WTC11 (cell line): ENCODE measurements at regions of chr17 and their contacts with region 1.

Region 1: GRCh38 chr17:6894206-6894528 is 62.6 kb upstream of the TEKT1 start:
- DNase-seq: peak; percentile 87
- ATAC-seq: peak; percentile 91
- H3K4me3 Mint-ChIP-seq: peak overlapping the region; percentile 73
- H3K27ac Mint-ChIP-seq: no peak overlapping the region
- H3K4me1 Mint-ChIP-seq: no peaks in the 10 kb centered on the region
- H3K27me3 Mint-ChIP-seq: peaks cover 55% of the 10 kb centered on the region
- CTCF ChIP-seq: peak; percentile 81

Region 2: DNA sequence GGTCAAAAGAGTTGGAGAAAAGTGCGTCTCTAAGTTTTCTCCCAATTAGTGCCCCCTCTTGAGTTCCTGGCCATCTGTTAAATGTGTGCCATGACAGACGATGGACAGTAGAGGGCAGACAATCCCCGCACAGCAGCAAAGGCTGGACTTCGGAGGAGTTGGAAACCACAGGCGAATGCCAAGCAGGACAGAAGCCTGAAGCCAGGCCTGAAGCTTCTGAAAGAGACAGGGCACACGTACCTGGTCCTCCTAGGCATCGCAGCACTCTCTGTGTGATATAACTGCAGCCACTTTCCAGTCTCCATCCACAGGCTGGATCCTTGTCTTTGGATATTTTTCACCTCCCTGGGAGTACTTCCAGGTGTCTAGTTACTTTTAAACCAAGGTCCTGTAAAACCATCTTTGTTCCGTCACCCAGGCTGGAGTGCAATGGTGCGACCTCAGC is 228.1 kb before region 1 on chr17:
- CTCF ChIA-PET with region 1: interaction called, 31 read pairs
- POLR2A ChIA-PET with region 1: no interaction called
- DNase-seq: peak; percentile 78
- ATAC-seq: peak; percentile 95
- H3K4me3 Mint-ChIP-seq: no peak overlapping the region
- H3K27ac Mint-ChIP-seq: no peak overlapping the region
- H3K4me1 Mint-ChIP-seq: peaks cover 12% of the 10 kb centered on the region
- H3K27me3 Mint-ChIP-seq: peaks cover 41% of the 10 kb centered on the region
- CTCF ChIP-seq: peak; percentile 68

Region 3: GRCh38 chr17:6701719-6702118 is 192.4 kb before region 1 on chr17:
- CTCF ChIA-PET with region 1: interaction called, 15 read pairs
- POLR2A ChIA-PET with region 1: no interaction called
- DNase-seq: peak; percentile 86
- ATAC-seq: peak; percentile 99
- H3K4me3 Mint-ChIP-seq: no peak overlapping the region
- H3K27ac Mint-ChIP-seq: no peak overlapping the region
- H3K4me1 Mint-ChIP-seq: peaks cover 6% of the 10 kb centered on the region
- H3K27me3 Mint-ChIP-seq: no peaks in the 10 kb centered on the region; the same call in 1 of the 2 replicates
- CTCF ChIP-seq: peak; percentile 55

Region 4: GRCh38 chr17:6843241-6843880 is 50.8 kb before region 1 on chr17:
- CTCF ChIA-PET with region 1: interaction called, 68 read pairs
- POLR2A ChIA-PET with region 1: no interaction called
- DNase-seq: no peak
- ATAC-seq: no peak
- H3K4me3 Mint-ChIP-seq: no peak overlapping the region
- H3K27ac Mint-ChIP-seq: no peak overlapping the region
- H3K4me1 Mint-ChIP-seq: no peaks in the 10 kb centered on the region
- H3K27me3 Mint-ChIP-seq: peaks cover 32% of the 10 kb centered on the region
- CTCF ChIP-seq: no peak

Region 5: DNA sequence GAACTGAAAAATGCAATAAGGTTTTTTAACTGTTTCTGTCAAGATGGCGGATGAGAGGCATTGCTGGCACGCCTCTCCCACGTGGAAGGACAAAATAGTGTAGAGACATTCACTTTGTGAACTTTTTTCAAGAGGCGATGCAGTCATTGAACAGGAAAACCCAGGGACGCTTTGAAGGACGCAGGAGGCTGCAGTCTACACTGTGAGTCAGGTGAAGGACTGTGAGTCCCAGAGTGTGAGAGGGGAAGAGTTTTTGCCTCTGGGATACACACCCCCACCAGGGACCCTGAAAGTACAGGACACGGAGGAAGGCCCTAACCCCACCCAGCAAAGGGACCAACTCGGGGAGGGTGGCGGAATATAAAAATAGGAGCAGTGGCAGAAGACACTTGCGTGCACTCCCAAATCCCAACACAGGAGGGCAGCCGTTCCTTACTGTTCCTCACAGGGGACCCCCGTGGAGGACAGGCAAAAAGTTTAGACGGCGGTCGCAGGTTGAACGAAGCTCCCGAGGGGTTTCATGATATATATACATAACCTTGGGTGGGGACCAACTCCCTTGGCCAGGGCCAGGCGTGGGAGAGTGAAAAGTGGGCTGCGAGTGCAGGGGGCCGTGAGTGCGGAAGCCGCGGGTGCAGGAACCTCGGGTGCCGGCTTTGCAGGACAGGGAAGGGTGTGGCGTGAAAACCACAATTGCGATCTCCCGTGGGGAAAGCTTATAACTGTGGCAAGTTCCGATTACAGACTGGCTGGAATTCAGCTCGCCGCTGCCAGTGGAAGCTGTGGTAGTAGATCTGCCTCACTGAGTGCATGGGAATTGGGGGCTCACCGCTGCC is 19.7 kb after region 1 on chr17:
- CTCF ChIA-PET with region 1: interaction called, 28 read pairs
- POLR2A ChIA-PET with region 1: no interaction called
- DNase-seq: peak; percentile 85
- ATAC-seq: peak; percentile 83
- H3K4me3 Mint-ChIP-seq: peak overlapping the region; percentile 46
- H3K27ac Mint-ChIP-seq: no peak overlapping the region
- H3K4me1 Mint-ChIP-seq: peaks cover 4% of the 10 kb centered on the region
- H3K27me3 Mint-ChIP-seq: peaks cover 55% of the 10 kb centered on the region
- CTCF ChIP-seq: peak; percentile 75

Region 6: GRCh38 chr17:7004398-7005253 is 110.5 kb after region 1 on chr17:
- CTCF ChIA-PET with region 1: interaction called, 18 read pairs
- POLR2A ChIA-PET with region 1: no interaction called
- DNase-seq: no peak
- ATAC-seq: peak; percentile 78
- H3K4me3 Mint-ChIP-seq: no peak overlapping the region
- H3K27ac Mint-ChIP-seq: no peak overlapping the region
- H3K4me1 Mint-ChIP-seq: no peaks in the 10 kb centered on the region
- H3K27me3 Mint-ChIP-seq: no peaks in the 10 kb centered on the region
- CTCF ChIP-seq: peak; percentile 62